Endothelial cell of umbilical vein (primary cell): ENCODE measurements at regions of chr7 and their contacts with region 1.

Region 1: GRCh38 chr7:95545078-95545498 is 51.2 kb downstream of the PDK4 start:
- DNase-seq: peak; percentile 83
- H3K4me3 ChIP-seq: peak overlapping the region in 2 of 3 experiments; percentile 26 to 69
- H3K27ac ChIP-seq: peak overlapping the region; percentile 1
- H3K4me1 ChIP-seq: peaks cover 9% of the 10 kb centered on the region
- H3K27me3 ChIP-seq: peaks cover 0 to 5% of the 10 kb centered on the region in 2 experiments
- CTCF ChIP-seq: peak; percentile 54 to 74
- POLR2A ChIP-seq: no peak

Region 2: GRCh38 chr7:95365151-95365550 is 179.9 kb before region 1 on chr7:
- CTCF ChIA-PET with region 1: no interaction called
- POLR2A ChIA-PET with region 1: no interaction called
- dilution Hi-C with region 1: no loop called
- intact Hi-C with region 1: no loop called
- DNase-seq: no peak
- H3K4me3 ChIP-seq: no peak overlapping the region
- H3K27ac ChIP-seq: no peak overlapping the region
- H3K4me1 ChIP-seq: no peaks in the 10 kb centered on the region
- H3K27me3 ChIP-seq: no peaks in the 10 kb centered on the region
- CTCF ChIP-seq: no peak
- POLR2A ChIP-seq: no peak

Region 3: GRCh38 chr7:95511716-95512260 is 33.3 kb before region 1 on chr7:
- CTCF ChIA-PET with region 1: interaction called, 46 read pairs
- POLR2A ChIA-PET with region 1: no interaction called
- dilution Hi-C with region 1: no loop called
- intact Hi-C with region 1: no loop called
- DNase-seq: peak; percentile 65
- H3K4me3 ChIP-seq: no peak overlapping the region
- H3K27ac ChIP-seq: no peak overlapping the region
- H3K4me1 ChIP-seq: no peaks in the 10 kb centered on the region
- H3K27me3 ChIP-seq: peaks cover 12% of the 10 kb centered on the region in 2 experiments
- CTCF ChIP-seq: peak; percentile 72 to 84
- POLR2A ChIP-seq: no peak

Region 4: DNA sequence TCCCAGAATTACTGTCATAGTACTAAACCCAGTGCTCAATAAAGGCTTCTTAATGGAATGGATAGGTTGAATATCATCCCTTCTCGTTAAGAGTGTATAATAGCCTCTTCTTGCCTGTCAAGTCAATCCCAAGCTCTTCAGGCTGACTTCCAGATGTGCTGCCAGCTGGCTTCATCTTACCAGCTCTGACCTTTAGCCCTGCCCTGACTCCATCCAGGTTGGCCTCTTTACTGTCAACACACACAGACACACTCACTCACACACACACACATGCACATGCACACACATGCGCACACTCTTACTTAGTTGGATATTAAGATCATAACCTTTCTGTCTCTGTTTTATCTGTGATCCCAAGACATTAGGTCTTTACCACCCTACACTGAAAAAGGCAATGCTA is 10.3 kb before region 1 on chr7:
- CTCF ChIA-PET with region 1: interaction called, 28 read pairs
- POLR2A ChIA-PET with region 1: no interaction called
- dilution Hi-C with region 1: no loop called
- intact Hi-C with region 1: no loop called
- DNase-seq: no peak
- H3K4me3 ChIP-seq: no peak overlapping the region
- H3K27ac ChIP-seq: no peak overlapping the region
- H3K4me1 ChIP-seq: no peaks in the 10 kb centered on the region
- H3K27me3 ChIP-seq: peaks cover 12 to 27% of the 10 kb centered on the region in 2 experiments
- CTCF ChIP-seq: no peak
- POLR2A ChIP-seq: no peak

Region 5: GRCh38 chr7:95608359-95609173 is 63.5 kb after region 1 on chr7:
- CTCF ChIA-PET with region 1: interaction called, 14 read pairs
- POLR2A ChIA-PET with region 1: no interaction called
- dilution Hi-C with region 1: no loop called
- intact Hi-C with region 1: loop called (anchors 2 kb)
- DNase-seq: peak; percentile 99
- H3K4me3 ChIP-seq: peak overlapping the region in 1 of 3 experiments; percentile 38
- H3K27ac ChIP-seq: no peak overlapping the region
- H3K4me1 ChIP-seq: peaks cover 21% of the 10 kb centered on the region
- H3K27me3 ChIP-seq: peaks cover 0 to 2% of the 10 kb centered on the region in 2 experiments
- CTCF ChIP-seq: no peak
- POLR2A ChIP-seq: no peak

Region 6: GRCh38 chr7:95690367-95690947 is 145.4 kb after region 1 on chr7:
- CTCF ChIA-PET with region 1: interaction called, 917 read pairs
- POLR2A ChIA-PET with region 1: no interaction called
- dilution Hi-C with region 1: no loop called
- intact Hi-C with region 1: no loop called
- DNase-seq: peak; percentile 59
- H3K4me3 ChIP-seq: no peak overlapping the region
- H3K27ac ChIP-seq: no peak overlapping the region
- H3K4me1 ChIP-seq: no peaks in the 10 kb centered on the region
- H3K27me3 ChIP-seq: peaks cover 0 to 5% of the 10 kb centered on the region in 2 experiments
- CTCF ChIP-seq: peak; percentile 37 to 42
- POLR2A ChIP-seq: no peak

Region 7: GRCh38 chr7:96361116-96361857 is 816.2 kb after region 1 on chr7:
- CTCF ChIA-PET with region 1: no interaction called
- POLR2A ChIA-PET with region 1: no interaction called
- dilution Hi-C with region 1: no loop called
- intact Hi-C with region 1: no loop called
- DNase-seq: no peak
- H3K4me3 ChIP-seq: no peak overlapping the region
- H3K27ac ChIP-seq: no peak overlapping the region
- H3K4me1 ChIP-seq: no peaks in the 10 kb centered on the region
- H3K27me3 ChIP-seq: no peaks in the 10 kb centered on the region
- CTCF ChIP-seq: no peak
- POLR2A ChIP-seq: no peak